ENCODE measurements at regions of chr2 and their contacts with region 1.

Region 1: DNA sequence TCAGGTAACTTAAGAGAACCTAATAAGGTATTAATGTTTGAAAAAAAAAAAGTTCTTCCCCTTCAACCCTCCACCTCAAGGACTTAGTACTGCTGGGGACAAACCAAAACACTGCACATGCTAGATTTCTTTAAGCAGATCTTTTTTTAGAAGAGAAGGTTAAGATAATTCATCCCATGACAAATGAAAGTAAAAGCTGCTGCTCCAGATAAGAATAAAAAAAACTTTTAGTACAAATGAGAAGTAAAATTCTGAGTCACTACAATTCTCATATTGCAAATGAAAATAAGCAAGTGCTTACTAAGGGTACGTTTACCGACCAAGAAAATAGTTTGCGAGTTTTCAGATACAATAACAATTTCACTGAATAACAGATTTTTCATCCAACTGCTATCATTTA is 8.9 kb downstream of the STAM2 start:
- DNase-seq: peak; percentile 72
- H3K4me3 ChIP-seq: peak overlapping the region; percentile 66
- H3K27ac ChIP-seq: peak overlapping the region; percentile 52
- H3K4me1 ChIP-seq: peaks cover 14% of the 10 kb centered on the region
- H3K27me3 ChIP-seq: no peaks in the 10 kb centered on the region

Region 2: DNA sequence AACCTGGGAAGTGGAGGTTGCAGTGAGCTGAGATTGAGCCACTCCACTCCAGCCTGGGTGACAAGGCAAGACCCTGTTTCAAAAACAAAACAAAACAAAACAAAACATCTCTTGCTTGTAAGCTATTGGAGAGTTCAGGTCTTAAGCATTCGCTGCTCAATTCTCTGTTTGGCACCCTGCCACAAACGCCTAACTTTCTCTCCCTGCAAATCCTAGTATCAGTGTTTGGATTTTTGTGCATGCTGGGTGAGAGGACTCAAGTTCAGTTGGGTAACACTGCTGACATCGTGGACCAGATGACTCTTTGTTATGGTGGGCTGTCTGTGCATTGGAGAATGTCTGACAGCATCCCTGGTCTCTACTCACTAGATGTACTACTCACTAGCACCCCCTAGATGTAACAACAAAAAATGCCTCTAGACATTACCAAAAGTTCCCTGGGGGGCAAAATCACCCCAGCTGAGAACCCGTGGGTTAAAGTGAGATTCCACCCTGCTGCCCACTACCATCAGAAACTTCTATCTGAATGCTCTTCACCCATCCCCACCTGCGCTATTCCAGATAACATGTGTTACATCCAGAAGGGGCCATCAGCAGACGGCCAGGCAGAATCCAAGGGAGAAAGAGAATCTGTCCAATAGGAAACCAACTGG is 118.7 kb before region 1 on chr2:
- in situ Hi-C with region 1: loop called (anchors 10 kb)
- DNase-seq: peak; percentile 38
- H3K4me3 ChIP-seq: no peak overlapping the region
- H3K27ac ChIP-seq: no peak overlapping the region
- H3K4me1 ChIP-seq: no peaks in the 10 kb centered on the region
- H3K27me3 ChIP-seq: peaks cover 91% of the 10 kb centered on the region

Region 3: DNA sequence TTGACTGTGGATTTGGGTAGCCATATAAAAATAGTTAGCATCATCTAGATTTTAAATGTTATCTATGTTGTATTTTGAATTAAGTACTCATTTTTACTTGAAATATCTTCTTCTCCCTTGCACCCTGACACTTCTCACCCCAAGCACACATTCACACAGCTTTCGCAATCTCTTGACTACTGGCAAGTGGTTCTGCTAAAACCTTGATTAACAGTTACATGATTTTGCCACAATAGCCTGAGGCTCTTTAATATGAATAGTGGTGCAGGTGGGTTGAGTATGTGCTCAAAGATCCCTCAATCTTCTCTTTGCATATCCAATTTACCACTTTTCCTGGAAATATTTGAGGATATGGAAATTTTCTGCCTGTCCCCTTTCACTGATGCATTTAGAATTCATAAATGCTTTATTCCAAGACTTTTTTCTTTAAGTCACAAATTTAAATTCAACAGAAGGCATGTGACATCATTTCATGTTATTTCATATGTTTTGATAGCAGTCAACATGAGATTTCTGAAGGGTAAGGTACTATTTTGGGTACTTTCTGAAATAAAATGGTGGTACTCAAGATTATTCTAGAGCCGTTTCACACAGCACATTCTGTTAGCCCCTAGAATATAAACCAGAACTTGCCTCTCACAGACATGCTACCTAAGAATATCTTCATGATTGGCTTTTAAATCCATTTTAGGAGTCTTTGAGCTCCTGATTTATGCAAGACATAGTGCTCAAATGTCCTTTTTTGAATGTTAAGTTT is 972.2 kb after region 1 on chr2:
- in situ Hi-C with region 1: no loop called
- DNase-seq: no peak
- H3K4me3 ChIP-seq: no peak overlapping the region
- H3K27ac ChIP-seq: no peak overlapping the region
- H3K4me1 ChIP-seq: no peaks in the 10 kb centered on the region
- H3K27me3 ChIP-seq: no peaks in the 10 kb centered on the region

Measured in GM23248 (cell line).